Activated naive CD4-positive, alpha-beta T cell treated with anti-CD3 and anti-CD28 coated beads for 36 hours (primary cell): ENCODE measurements at regions of chr12 and their contacts with region 1.

Region 1: GRCh38 chr12:121911824-121912585 is 6.4 kb upstream of the CFAP251 start:
- DNase-seq: peak; percentile 51
- H3K4me3 Mint-ChIP-seq: no peak overlapping the region
- H3K27ac Mint-ChIP-seq: peak overlapping the region; percentile 51
- H3K4me1 Mint-ChIP-seq: peaks cover 14% of the 10 kb centered on the region
- H3K27me3 Mint-ChIP-seq: no peaks in the 10 kb centered on the region

Region 2: GRCh38 chr12:121992059-121992879 is 80.3 kb after region 1 on chr12:
- CTCF ChIA-PET with region 1: interaction called, 5 read pairs
- intact Hi-C with region 1: loop called (anchors 1 kb)
- DNase-seq: peak; percentile 89
- H3K4me3 Mint-ChIP-seq: peak overlapping the region; percentile 43
- H3K27ac Mint-ChIP-seq: peak overlapping the region; percentile 87
- H3K4me1 Mint-ChIP-seq: peaks cover 20% of the 10 kb centered on the region
- H3K27me3 Mint-ChIP-seq: no peaks in the 10 kb centered on the region

Region 3: DNA sequence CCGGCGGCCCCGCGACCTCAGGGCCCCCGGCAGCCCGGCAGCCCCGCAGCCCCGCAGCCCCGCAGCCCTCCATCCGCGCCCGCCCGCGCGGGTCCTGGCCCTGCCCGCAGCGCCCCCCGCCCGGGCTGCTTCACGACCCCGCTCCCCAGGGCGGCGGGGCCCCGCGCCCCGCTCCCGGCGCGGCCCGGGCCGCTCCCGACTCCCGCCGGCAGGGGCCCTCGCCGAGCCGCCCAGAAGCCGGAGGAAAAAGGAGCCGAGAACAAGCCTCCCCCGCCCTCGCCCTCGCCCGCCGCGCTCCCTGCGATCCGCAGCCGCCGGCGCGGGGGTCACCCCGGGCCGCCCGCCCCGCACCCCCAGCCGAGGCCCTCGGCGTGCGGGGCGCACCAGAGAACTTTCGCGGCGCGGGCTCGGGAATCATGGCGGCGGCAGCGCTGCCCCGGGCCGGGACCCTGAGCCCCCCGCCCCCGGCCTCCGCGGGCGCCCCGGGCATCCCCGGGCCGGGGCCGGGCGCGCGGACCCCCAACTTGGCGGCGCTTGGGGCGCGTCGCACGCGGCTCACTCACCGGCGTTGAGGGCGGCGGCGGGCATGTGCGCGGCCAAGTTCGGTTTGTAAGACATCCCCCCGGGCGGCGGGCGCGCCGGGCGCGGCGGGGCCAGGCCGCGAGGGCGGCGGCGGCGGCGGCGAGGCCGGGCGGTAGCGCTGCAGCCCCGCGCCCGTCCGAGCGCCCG is 1359.2 kb after region 1 on chr12:
- CTCF ChIA-PET with region 1: no interaction called
- intact Hi-C with region 1: no loop called
- DNase-seq: peak; percentile 81
- H3K4me3 Mint-ChIP-seq: no peak overlapping the region
- H3K27ac Mint-ChIP-seq: no peak overlapping the region
- H3K4me1 Mint-ChIP-seq: peaks cover 23% of the 10 kb centered on the region
- H3K27me3 Mint-ChIP-seq: no peaks in the 10 kb centered on the region